ENCODE measurements at regions of chr4 and their contacts with region 1.

Region 1: GRCh38 chr4:54064295-54065111 is at the start of gene CHIC2:
- DNase-seq: peak; percentile 98
- ATAC-seq: peak; percentile 84
- H3K4me3 Mint-ChIP-seq: peak within 1 kb of the TSS; percentile 94
- H3K27ac Mint-ChIP-seq: peak within 1 kb of the TSS; percentile 94
- H3K4me1 Mint-ChIP-seq: peaks cover 41% of the 10 kb centered on the region
- H3K27me3 Mint-ChIP-seq: no peaks in the 10 kb centered on the region
- total RNA-seq, gene CHIC2: 14.7 to 17.7 TPM

Region 2: GRCh38 chr4:53101191-53101581 is 963.3 kb before region 1 on chr4:
- CTCF ChIA-PET with region 1: no interaction called
- POLR2A ChIA-PET with region 1: no interaction called
- intact Hi-C with region 1: loop called in 1 of 2 experiments (anchors 10 kb)
- DNase-seq: no peak
- ATAC-seq: peak; percentile 95
- H3K4me3 Mint-ChIP-seq: no peak overlapping the region
- H3K27ac Mint-ChIP-seq: peak overlapping the region; percentile 74
- H3K4me1 Mint-ChIP-seq: peaks cover 22% of the 10 kb centered on the region
- H3K27me3 Mint-ChIP-seq: no peaks in the 10 kb centered on the region

Region 3: DNA sequence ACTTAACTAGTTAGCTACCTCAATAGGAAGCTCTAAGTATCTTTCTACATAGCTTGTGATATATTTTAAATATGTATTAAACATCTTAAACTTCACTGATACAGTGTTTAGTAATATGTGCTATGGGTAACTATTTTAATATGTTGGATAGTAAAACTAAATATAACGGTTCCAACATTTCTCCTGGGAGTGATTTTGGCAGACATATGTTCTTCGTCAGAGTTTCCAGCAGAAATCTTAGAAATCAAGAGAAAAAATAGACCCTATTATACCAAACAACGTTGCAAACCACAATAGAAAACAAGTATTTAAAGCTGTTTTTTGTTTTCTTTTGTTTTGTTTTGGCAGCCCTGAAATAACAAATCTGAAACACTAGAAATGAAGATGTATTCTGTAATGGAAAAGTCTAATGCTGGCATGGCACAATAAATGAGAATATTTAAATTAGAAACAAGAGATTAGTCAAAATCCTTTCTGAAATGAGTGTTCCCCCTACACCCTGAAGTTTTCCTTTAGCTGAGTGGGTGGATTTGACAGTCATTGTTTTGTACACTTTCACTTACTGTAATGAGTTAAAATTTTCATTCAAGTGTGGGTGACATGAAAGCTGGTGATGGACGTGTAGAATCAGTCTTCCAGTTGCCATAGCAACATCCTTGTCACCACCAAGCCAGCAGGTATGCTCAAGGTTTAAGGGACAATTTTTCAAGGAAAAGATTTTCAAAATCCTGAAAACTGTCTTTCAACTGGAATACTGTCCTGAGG is 932.2 kb before region 1 on chr4:
- CTCF ChIA-PET with region 1: interaction called, 3 read pairs
- POLR2A ChIA-PET with region 1: interaction called, 3 read pairs
- intact Hi-C with region 1: loop called (anchors 1 to 5 kb)
- DNase-seq: peak; percentile 49
- ATAC-seq: peak; percentile 83
- H3K4me3 Mint-ChIP-seq: no peak overlapping the region
- H3K27ac Mint-ChIP-seq: peak overlapping the region; percentile 88
- H3K4me1 Mint-ChIP-seq: peaks cover 34% of the 10 kb centered on the region
- H3K27me3 Mint-ChIP-seq: no peaks in the 10 kb centered on the region

Region 4: GRCh38 chr4:53346920-53347852 is 717.3 kb before region 1 on chr4:
- CTCF ChIA-PET with region 1: no interaction called
- POLR2A ChIA-PET with region 1: no interaction called
- intact Hi-C with region 1: no loop called
- DNase-seq: no peak
- ATAC-seq: no peak
- H3K4me3 Mint-ChIP-seq: no peak overlapping the region
- H3K27ac Mint-ChIP-seq: no peak overlapping the region
- H3K4me1 Mint-ChIP-seq: no peaks in the 10 kb centered on the region
- H3K27me3 Mint-ChIP-seq: no peaks in the 10 kb centered on the region

Region 5: GRCh38 chr4:53377319-53378170 is 687.0 kb before region 1 on chr4 and contains the start of gene FIP1L1:
- CTCF ChIA-PET with region 1: no interaction called
- POLR2A ChIA-PET with region 1: no interaction called
- intact Hi-C with region 1: loop called (anchors 1 to 5 kb)
- DNase-seq: peak; percentile 98
- ATAC-seq: peak; percentile 97
- H3K4me3 Mint-ChIP-seq: peak within 1 kb of the TSS; percentile 99
- H3K27ac Mint-ChIP-seq: peak within 1 kb of the TSS; percentile 97
- H3K4me1 Mint-ChIP-seq: peaks cover 29% of the 10 kb centered on the region
- H3K27me3 Mint-ChIP-seq: no peaks in the 10 kb centered on the region
- total RNA-seq, gene FIP1L1: 72.3 to 96.3 TPM

Region 6: GRCh38 chr4:54041100-54041499 is 23.4 kb before region 1 on chr4:
- CTCF ChIA-PET with region 1: interaction called, 3 read pairs
- POLR2A ChIA-PET with region 1: no interaction called
- intact Hi-C with region 1: loop called in 1 of 2 experiments (anchors 2 kb)
- DNase-seq: no peak
- ATAC-seq: peak; percentile 83
- H3K4me3 Mint-ChIP-seq: no peak overlapping the region
- H3K27ac Mint-ChIP-seq: no peak overlapping the region
- H3K4me1 Mint-ChIP-seq: peaks cover 41% of the 10 kb centered on the region
- H3K27me3 Mint-ChIP-seq: no peaks in the 10 kb centered on the region

Region 7: DNA sequence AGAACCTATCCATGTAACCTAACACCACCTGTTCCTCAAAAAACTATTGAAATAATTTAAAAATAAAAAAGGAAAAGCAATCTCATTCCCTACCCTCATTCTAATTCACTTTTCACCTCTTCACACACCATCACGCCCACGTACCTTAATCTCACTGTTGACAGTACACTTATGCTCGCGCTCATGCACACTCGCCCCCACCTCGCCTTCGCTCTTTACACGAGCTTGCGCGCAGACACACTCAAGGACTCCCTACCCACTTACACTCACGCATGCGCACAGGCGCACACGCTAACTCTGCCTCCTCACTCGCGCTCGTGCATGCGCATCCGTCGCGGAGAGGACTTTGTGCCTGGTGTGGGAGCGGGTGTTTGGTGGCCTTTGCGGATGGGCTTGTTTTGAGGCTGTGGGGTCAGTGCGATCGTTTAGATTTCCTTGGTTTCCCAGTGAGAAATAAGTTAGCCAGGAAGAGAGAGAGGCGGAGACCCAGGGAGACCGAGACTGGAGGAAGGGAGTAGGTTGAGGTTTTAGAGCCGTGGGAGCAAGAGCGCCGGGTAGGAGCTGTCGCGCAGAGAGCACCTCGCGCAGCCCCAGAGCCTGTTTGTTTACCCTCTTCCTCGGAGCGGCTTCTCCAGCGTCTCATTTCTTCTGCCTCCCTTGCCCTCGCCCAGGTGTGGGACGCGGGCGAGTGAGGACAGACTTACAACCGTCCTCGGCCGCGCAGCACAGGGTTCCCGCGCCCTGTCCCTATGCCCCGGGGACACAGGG is 27.3 kb after region 1 on chr4:
- CTCF ChIA-PET with region 1: interaction called, 3 read pairs
- POLR2A ChIA-PET with region 1: no interaction called
- intact Hi-C with region 1: loop called (anchors 1 to 2 kb)
- DNase-seq: peak; percentile 84
- ATAC-seq: peak; percentile 87
- H3K4me3 Mint-ChIP-seq: peak overlapping the region; percentile 76
- H3K27ac Mint-ChIP-seq: peak overlapping the region; percentile 44
- H3K4me1 Mint-ChIP-seq: peaks cover 35% of the 10 kb centered on the region
- H3K27me3 Mint-ChIP-seq: peaks cover 59% of the 10 kb centered on the region

Region 8: DNA sequence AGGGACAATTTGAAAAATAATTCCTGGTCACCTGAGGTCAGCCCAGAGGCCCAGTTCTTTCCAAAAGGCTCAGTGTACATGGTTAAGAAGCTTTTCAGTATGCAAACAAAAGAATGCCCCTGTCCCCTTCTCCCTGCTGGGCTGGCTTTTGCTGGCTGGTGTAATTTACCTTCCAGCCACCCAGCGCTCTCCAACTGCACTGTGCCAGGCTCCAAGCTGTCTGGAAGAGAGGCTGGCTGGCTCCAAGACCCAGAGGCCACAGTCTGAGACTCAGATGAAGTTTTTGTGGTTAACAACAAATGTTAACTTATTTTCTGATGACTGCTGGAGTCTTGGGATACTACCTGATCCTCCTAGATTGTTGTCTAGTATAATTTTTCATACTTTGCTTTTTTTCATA is 581.3 kb after region 1 on chr4:
- CTCF ChIA-PET with region 1: no interaction called
- POLR2A ChIA-PET with region 1: no interaction called
- intact Hi-C with region 1: no loop called
- DNase-seq: no peak
- ATAC-seq: no peak
- H3K4me3 Mint-ChIP-seq: no peak overlapping the region
- H3K27ac Mint-ChIP-seq: no peak overlapping the region
- H3K4me1 Mint-ChIP-seq: no peaks in the 10 kb centered on the region
- H3K27me3 Mint-ChIP-seq: no peaks in the 10 kb centered on the region

Region 9: GRCh38 chr4:55018521-55018920 is 954.0 kb after region 1 on chr4:
- CTCF ChIA-PET with region 1: no interaction called
- POLR2A ChIA-PET with region 1: no interaction called
- intact Hi-C with region 1: no loop called
- DNase-seq: no peak
- ATAC-seq: no peak
- H3K4me3 Mint-ChIP-seq: no peak overlapping the region
- H3K27ac Mint-ChIP-seq: no peak overlapping the region
- H3K4me1 Mint-ChIP-seq: no peaks in the 10 kb centered on the region
- H3K27me3 Mint-ChIP-seq: peaks cover 10% of the 10 kb centered on the region

Region 10: DNA sequence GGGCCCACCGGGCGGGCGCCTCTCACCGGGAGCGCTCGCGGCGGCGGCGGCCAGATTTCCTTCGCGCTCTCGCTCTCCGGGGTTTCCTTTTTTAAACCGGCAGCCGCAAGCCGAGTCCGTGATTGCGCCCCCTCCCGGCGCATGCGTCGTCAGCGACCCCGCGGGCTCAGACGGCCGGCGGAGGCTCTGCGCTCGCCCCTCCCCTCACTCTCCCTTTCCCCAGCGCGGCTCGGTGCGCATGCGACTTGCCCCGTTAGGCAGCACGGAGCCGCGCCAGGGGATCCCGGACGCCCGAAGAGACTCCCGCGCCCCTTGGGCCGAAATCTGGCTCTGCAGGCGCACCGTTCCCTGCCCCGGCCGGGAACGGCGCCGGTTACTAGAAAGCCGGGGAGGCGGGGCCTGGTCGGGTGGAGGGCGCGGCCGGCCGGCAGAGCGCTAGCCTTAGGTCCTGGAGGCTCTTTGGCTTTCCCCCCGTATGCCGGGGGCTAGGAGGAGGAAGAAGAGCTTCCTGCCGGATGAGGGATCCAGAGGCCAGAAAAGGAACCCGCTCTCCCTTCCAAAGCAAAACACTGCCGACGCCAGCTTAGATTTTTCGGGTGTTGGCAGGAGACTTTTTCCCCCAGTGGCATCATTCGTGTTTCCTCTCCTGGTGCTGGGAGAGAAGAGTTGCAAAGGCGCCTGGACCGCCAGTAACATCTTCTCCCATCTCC is 1482.4 kb after region 1 on chr4 and contains the start of gene CLOCK:
- CTCF ChIA-PET with region 1: no interaction called
- POLR2A ChIA-PET with region 1: no interaction called
- intact Hi-C with region 1: loop called in 1 of 2 experiments (anchors 2 kb)
- DNase-seq: peak; percentile 90
- ATAC-seq: peak; percentile 77
- H3K4me3 Mint-ChIP-seq: peak within 1 kb of the TSS; percentile 90
- H3K27ac Mint-ChIP-seq: peak within 1 kb of the TSS; percentile 86
- H3K4me1 Mint-ChIP-seq: peaks cover 46% of the 10 kb centered on the region
- H3K27me3 Mint-ChIP-seq: peaks cover 7% of the 10 kb centered on the region
- total RNA-seq, gene CLOCK: 10.4 to 13.3 TPM

Measured in activated CD4-positive, alpha-beta T cell treated with anti-CD3 and anti-CD28 coated beads for 36 hours (primary cell).